ENCODE measurements at regions of chr3 and their contacts with region 1.

Region 1: DNA sequence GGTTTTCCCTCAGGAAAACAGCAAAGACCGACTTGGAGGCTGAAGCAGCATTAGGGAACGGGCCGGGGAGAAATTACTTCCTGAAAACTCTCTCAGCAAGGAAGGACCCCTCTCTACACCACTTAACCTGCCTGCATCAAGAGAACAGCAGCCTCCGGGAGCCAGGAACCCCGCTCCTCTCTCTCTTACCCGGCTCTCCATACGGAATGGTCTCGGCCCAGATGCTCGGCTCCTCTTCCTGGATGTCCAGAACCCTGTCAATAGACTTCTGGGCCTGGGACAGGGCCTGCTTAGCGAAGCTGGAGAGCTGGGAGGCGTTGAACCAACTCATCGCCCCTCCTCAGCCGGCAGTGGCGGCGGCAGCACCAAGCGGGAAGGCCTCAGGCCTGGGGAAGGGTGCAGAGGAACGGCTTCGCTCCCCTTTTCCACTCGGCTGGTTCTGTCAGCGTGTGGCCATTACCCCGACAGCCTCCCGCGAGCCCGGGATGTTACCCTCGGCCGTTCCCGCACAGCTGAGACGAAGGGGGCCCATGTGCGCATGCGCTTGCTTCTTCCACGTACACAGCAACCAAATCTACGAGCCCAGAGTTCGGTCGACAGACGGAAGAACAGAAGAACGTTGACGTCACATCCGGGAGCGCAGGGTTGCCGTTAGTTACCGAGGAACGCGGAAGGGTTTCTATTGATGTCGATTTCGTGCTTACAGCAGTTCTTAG is at the start of gene TMF1:
- DNase-seq: peak; percentile 99
- ATAC-seq: peak; percentile 95
- H3K4me3 Mint-ChIP-seq: peak within 1 kb of the TSS; percentile 99
- H3K27ac Mint-ChIP-seq: peak within 1 kb of the TSS; percentile 98
- H3K4me1 Mint-ChIP-seq: peaks cover 40% of the 10 kb centered on the region
- H3K27me3 Mint-ChIP-seq: no peaks in the 10 kb centered on the region
- total RNA-seq, gene TMF1: 33.2 to 34.1 TPM

Region 2: DNA sequence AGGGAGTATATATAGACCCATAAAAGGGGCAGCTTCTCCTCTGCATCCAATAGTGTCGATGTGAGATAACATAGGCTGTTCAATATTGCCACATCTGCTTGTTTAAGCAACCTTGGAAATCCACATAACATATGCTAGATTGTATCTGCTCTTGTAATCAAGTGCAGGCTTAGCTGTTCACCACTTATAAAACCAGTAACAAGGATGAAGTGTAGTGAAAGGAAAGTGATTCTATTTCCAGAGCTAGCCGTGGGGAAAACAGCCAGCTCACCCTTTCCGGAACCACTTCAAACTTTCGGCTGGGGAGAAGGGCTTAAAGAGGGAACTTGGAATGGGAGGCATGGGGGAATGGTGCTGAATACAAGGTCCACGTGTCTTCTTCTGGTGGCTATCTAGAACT is 323.6 kb before region 1 on chr3:
- CTCF ChIA-PET with region 1: no interaction called
- POLR2A ChIA-PET with region 1: no interaction called
- intact Hi-C with region 1: no loop called
- DNase-seq: no peak
- ATAC-seq: no peak
- H3K4me3 Mint-ChIP-seq: no peak overlapping the region
- H3K27ac Mint-ChIP-seq: no peak overlapping the region
- H3K4me1 Mint-ChIP-seq: no peaks in the 10 kb centered on the region
- H3K27me3 Mint-ChIP-seq: peaks cover 6% of the 10 kb centered on the region

Region 3: GRCh38 chr3:69013253-69014021 is 38.5 kb before region 1 on chr3 and contains the start of gene EOGT:
- CTCF ChIA-PET with region 1: interaction called, 4 read pairs
- POLR2A ChIA-PET with region 1: interaction called, 3 read pairs
- intact Hi-C with region 1: loop called in 1 of 2 experiments (anchors 1 kb)
- DNase-seq: peak; percentile 88
- ATAC-seq: peak; percentile 85
- H3K4me3 Mint-ChIP-seq: peak within 1 kb of the TSS; percentile 77
- H3K27ac Mint-ChIP-seq: peak within 1 kb of the TSS; percentile 82
- H3K4me1 Mint-ChIP-seq: peaks cover 24% of the 10 kb centered on the region
- H3K27me3 Mint-ChIP-seq: no peaks in the 10 kb centered on the region
- total RNA-seq, gene EOGT: 6.0 to 8.4 TPM

Region 4: DNA sequence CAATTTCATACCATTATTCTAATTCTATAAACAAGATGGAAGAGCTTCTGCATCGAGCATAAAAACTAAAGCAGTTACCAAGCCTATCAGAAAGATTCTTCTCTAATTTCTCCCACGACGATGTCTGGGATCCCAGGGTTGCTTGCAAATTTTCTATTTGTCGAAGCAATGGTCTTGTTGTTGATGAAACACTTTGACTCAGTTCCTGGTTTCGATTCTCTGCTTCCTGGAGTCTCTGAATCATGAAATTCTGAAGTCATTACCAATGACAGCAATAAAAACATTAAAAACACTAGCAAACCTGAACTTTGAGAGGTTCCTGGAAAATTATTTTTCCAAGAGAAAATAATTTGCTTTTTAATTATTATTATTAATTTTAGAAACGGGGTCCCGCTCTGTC is 18.4 kb before region 1 on chr3:
- CTCF ChIA-PET with region 1: interaction called, 3 read pairs
- POLR2A ChIA-PET with region 1: no interaction called
- intact Hi-C with region 1: loop called in 1 of 2 experiments (anchors 1 kb)
- DNase-seq: peak; percentile 28
- ATAC-seq: peak; percentile 80
- H3K4me3 Mint-ChIP-seq: no peak overlapping the region
- H3K27ac Mint-ChIP-seq: no peak overlapping the region
- H3K4me1 Mint-ChIP-seq: peaks cover 15% of the 10 kb centered on the region
- H3K27me3 Mint-ChIP-seq: no peaks in the 10 kb centered on the region

Region 5: DNA sequence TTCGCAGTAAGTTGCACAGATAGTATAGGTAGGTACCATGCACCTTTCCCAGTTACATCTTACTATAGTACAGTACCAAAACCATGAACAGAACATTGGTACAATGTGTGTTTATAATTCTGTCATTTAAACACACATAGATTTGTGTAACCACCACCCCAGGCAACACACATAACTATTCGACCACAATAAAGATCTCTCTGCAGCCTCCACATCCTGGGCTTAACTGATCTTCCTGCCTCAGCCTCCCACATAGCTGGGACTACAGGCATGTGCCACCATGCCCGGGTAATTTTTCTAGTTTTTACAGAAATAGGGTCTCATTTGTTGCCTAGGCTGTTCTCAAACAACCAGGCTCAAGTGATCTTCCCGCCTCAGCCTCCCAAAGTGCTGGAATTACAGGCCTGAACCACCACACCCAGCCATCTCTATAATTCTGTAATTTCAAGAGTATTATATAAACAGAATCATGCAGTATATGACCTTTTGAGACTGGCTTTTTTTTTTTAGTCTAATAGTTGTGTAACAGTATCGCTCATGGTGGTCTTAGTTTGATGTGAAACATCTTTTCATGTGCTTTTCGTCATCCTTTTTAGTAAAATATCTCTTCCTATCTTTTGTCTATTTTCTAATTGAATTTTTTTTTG is 13.5 kb after region 1 on chr3:
- CTCF ChIA-PET with region 1: interaction called, 25 read pairs
- POLR2A ChIA-PET with region 1: interaction called, 4 read pairs
- intact Hi-C with region 1: no loop called
- DNase-seq: no peak
- ATAC-seq: peak; percentile 81
- H3K4me3 Mint-ChIP-seq: no peak overlapping the region
- H3K27ac Mint-ChIP-seq: peak overlapping the region; percentile 74
- H3K4me1 Mint-ChIP-seq: peaks cover 28% of the 10 kb centered on the region
- H3K27me3 Mint-ChIP-seq: no peaks in the 10 kb centered on the region

Region 6: GRCh38 chr3:69084326-69085167 is 32.6 kb after region 1 on chr3 and contains the start of gene ARL6IP5:
- CTCF ChIA-PET with region 1: interaction called, 24 read pairs
- POLR2A ChIA-PET with region 1: interaction called, 7 read pairs
- intact Hi-C with region 1: loop called (anchors 1 kb)
- DNase-seq: peak; percentile 97
- ATAC-seq: peak; percentile 48
- H3K4me3 Mint-ChIP-seq: peak within 1 kb of the TSS; percentile 90
- H3K27ac Mint-ChIP-seq: peak within 1 kb of the TSS; percentile 97
- H3K4me1 Mint-ChIP-seq: peaks cover 59% of the 10 kb centered on the region
- H3K27me3 Mint-ChIP-seq: no peaks in the 10 kb centered on the region
- total RNA-seq, gene ARL6IP5: 60.4 to 76.0 TPM

Measured in activated CD4-positive, alpha-beta T cell treated with anti-CD3 and anti-CD28 coated beads for 36 hours (primary cell).